H1 (cell line): ENCODE measurements at regions of chr13 and their contacts with region 1.

Region 1: GRCh38 chr13:98445340-98446233 is 131.3 kb downstream of the STK24 start:
- DNase-seq: peak; percentile 64 to 96
- H3K4me3 ChIP-seq: no peak overlapping the region
- H3K27ac ChIP-seq: no peak overlapping the region
- H3K4me1 ChIP-seq: peaks cover under 1 to 16% (median 6%) of the 10 kb centered on the region in 4 experiments; a peak in 6 of 7 replicates
- H3K27me3 ChIP-seq: no peaks in the 10 kb centered on the region
- CTCF ChIP-seq: peak in 2 of 3 experiments; percentile 97 to 99; a peak in 3 of 4 replicates
- EP300 ChIP-seq: no peak
- POLR2A ChIP-seq: peak in 1 of 2 experiments; percentile 37; a peak in 1 of 3 replicates
- RAD21 ChIP-seq: peak; percentile 90 to 94

Region 2: GRCh38 chr13:98429977-98430736 is 15.4 kb before region 1 on chr13:
- CTCF ChIA-PET with region 1: interaction called, 53 read pairs
- POLR2A ChIA-PET with region 1: interaction called, 4 read pairs
- DNase-seq: no peak
- H3K4me3 ChIP-seq: no peak overlapping the region
- H3K27ac ChIP-seq: no peak overlapping the region
- H3K4me1 ChIP-seq: 0 out of 7 replicates have a peak, but pooled peaks cover 0 to 2% (median 0%) of the 10 kb centered on the region in 4 experiments
- H3K27me3 ChIP-seq: no peaks in the 10 kb centered on the region
- CTCF ChIP-seq: no peak
- EP300 ChIP-seq: no peak
- POLR2A ChIP-seq: no peak
- RAD21 ChIP-seq: no peak

Region 3: DNA sequence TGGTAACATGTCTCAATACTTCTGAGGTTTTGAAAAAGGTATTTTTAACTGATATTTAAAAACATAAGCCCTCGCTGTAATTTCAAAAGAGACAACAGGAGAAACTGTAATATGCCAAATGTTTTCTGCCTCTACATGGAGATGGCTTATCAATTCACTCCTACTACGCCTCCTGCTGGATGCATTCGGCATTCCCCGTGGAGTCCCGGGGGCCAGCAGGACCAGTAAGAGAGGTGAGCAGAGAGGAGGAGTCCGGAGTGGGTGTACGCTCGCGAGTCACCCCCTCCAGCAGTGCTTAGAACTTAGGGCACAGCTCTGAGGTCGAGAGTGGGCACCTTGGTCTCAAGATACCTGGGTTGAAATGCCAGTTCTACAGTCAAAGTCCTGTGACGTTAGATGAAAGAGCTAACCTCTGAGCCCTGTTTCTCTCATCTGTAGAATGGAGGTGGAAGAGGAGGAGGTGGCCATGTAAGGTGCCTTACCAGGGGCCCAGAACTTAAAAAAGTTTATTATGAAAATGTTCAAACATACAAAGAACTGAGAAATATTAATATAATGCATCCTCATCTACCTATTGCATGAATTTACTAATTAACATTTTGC is 21.1 kb after region 1 on chr13:
- CTCF ChIA-PET with region 1: interaction called, 115 read pairs
- POLR2A ChIA-PET with region 1: interaction called, 5 read pairs
- DNase-seq: peak in 1 of 2 experiments; percentile 94
- H3K4me3 ChIP-seq: no peak overlapping the region
- H3K27ac ChIP-seq: no peak overlapping the region
- H3K4me1 ChIP-seq: peaks cover 0 to 3% (median 1%) of the 10 kb centered on the region in 4 experiments; a peak in 2 of 7 replicates
- H3K27me3 ChIP-seq: no peaks in the 10 kb centered on the region
- CTCF ChIP-seq: peak; percentile 75 to 89 (median 87)
- EP300 ChIP-seq: no peak
- POLR2A ChIP-seq: no peak
- RAD21 ChIP-seq: peak; percentile 65 to 73

Region 4: DNA sequence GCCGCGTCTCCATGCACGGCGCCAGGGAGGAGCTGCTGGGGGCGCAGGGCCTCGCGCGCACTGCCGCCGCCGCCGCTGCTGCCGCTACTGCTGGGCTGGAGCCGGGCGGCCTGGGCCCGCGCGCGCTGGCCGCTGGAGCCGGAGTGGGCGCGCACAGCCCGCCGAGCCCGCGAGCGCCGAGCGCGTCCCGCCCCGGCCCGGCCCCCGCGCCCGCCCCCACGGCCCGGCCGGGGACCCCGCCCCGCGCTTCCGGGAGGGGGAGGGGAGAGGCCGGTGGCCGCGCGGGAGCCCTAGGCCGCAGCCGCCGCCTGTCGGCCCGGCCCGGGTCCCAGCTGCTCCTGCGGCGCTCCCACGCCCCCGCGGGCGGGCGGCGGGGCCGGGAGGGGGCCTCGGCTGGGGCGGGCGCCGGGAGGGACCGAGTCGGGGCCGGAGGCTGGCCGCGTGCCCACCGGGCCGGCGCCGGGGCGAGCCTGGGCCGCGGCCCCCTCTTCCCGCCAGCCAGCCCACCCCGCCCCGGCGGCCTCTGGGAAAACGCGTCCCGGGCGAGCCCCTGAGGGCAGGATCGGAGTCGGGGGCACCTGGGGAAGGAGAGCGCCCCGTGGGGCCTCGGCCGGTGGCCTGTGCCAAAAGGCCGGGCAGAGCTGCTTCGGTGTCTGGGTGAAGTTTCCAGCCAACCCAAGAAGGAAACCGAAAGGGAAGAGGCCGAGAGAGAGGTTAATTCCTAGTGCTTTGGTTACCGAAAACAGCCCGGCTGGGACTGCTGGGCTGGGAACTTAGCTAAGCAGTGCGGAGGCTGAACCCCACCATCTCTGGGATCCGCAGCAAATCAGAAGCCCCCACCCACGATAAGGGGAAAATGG is 131.6 kb after region 1 on chr13 and contains the start of gene STK24:
- CTCF ChIA-PET with region 1: no interaction called
- POLR2A ChIA-PET with region 1: interaction called, 11 read pairs
- DNase-seq: peak in 1 of 2 experiments; percentile 75
- H3K4me3 ChIP-seq: peak within 1 kb of the TSS; percentile 59 to 90 (median 83)
- H3K27ac ChIP-seq: peak within 1 kb of the TSS; percentile 83
- H3K4me1 ChIP-seq: peaks cover 2 to 19% (median 5%) of the 10 kb centered on the region in 4 experiments
- H3K27me3 ChIP-seq: no peaks in the 10 kb centered on the region
- CTCF ChIP-seq: no peak
- EP300 ChIP-seq: no peak
- POLR2A ChIP-seq: peak in 1 of 2 experiments; percentile 70; a peak in 1 of 3 replicates
- RAD21 ChIP-seq: no peak
- total RNA-seq, gene STK24: 142 and 143 TPM in 2 replicates

Region 5: DNA sequence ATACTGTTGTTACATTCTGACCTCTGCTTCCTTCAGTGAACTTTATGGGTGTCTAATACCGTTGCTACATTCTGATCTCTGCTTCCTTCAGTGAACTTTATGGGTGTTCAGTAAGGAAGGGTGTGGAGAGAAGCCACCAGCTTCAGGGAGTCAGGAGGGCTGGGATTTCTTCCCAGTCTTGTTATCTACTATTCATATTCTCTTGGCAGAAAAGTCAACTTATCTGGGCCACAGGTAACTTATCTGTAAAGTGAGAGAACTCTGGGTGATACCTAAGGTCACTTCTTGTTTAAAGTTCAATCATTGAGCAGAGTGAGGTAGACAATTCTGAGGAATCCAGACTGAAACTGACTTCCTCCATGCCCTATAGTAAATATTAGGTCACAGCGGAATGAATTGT is 202.6 kb after region 1 on chr13:
- CTCF ChIA-PET with region 1: interaction called, 52 read pairs
- POLR2A ChIA-PET with region 1: no interaction called
- DNase-seq: no peak
- H3K4me3 ChIP-seq: no peak overlapping the region
- H3K27ac ChIP-seq: no peak overlapping the region
- H3K4me1 ChIP-seq: no peaks in the 10 kb centered on the region
- H3K27me3 ChIP-seq: no peaks in the 10 kb centered on the region; a peak in 1 of 7 replicates
- CTCF ChIP-seq: no peak
- EP300 ChIP-seq: no peak
- POLR2A ChIP-seq: no peak
- RAD21 ChIP-seq: no peak

Region 6: DNA sequence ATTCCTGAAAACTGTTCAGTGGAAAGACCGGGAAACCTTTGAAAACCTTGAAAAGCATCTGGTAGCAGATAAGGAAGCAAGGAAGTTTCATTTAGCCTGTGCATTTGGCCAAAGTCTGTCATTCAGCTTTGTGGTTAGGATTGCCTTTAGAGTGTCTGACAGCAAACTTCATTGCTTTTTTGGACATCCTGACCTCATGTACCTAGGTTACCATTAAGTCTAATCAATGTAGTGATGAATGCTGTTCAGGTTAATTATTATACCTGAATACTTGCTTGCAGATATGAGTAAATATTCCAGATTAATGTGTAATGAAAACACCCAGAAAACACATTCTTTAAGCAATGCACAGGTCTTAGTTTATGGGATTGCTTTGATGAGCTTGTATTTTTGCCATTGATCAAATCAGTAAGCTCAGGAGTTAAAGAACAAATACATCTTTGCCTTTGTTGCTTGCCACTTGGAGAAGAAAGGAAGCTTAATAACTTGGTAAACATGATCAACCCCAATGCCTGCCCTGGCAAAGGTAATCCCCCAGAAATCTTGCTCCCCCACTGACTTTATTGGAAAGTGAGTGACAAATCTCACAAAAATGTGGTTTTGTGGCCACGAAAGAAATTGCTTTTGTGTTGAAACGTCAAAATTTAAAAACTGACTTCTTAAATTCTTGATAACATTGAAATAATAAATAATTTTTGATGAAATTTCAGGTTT is 219.5 kb after region 1 on chr13:
- CTCF ChIA-PET with region 1: interaction called, 12 read pairs
- POLR2A ChIA-PET with region 1: no interaction called
- DNase-seq: no peak
- H3K4me3 ChIP-seq: no peak overlapping the region
- H3K27ac ChIP-seq: no peak overlapping the region
- H3K4me1 ChIP-seq: no peaks in the 10 kb centered on the region
- H3K27me3 ChIP-seq: no peaks in the 10 kb centered on the region; a peak in 1 of 7 replicates
- CTCF ChIP-seq: no peak
- EP300 ChIP-seq: no peak
- POLR2A ChIP-seq: no peak
- RAD21 ChIP-seq: no peak

Region 7: DNA sequence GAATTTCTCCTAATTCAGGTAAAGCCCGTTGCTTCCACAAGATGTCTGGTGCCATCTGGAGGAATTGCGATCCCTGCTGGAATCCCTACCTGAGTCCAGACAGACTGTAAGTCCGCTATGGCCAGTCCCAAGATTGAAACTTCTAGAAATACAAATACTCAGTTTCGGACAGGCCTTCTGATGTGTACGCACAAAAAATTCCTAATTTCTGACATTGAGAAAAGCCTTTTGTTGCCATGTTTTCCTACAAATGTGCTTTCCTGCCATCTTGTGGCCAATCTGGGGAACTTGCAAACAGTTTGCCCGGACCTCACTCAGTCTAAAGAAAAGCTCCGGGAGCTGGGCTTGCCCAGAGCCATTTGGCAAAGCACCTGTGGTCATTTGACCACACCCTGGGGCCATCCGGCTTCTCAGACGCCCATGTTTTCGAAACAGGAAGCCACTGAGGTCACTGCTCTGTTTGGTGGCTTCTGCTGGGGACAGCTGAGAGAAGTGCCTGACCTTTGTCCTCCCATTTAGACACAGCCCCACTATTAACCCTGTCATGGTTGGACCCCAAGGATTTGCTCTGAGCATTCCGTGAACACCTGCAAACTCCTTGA is 227.5 kb after region 1 on chr13:
- CTCF ChIA-PET with region 1: interaction called, 21 read pairs
- POLR2A ChIA-PET with region 1: interaction called, 3 read pairs
- DNase-seq: peak; percentile 15 to 76
- H3K4me3 ChIP-seq: peak overlapping the region in 3 of 4 experiments; percentile 5 to 34 (median 7); a peak in 2 of 8 replicates
- H3K27ac ChIP-seq: no peak overlapping the region
- H3K4me1 ChIP-seq: peaks cover 0 to 3% (median 1%) of the 10 kb centered on the region in 4 experiments; a peak in 2 of 7 replicates
- H3K27me3 ChIP-seq: no peaks in the 10 kb centered on the region
- CTCF ChIP-seq: peak; percentile 41 to 87 (median 68)
- EP300 ChIP-seq: no peak
- POLR2A ChIP-seq: no peak
- RAD21 ChIP-seq: peak; percentile 78 to 80